ACHN (cell line): ENCODE measurements at regions of chr12 and their contacts with region 1.

Region 1: GRCh38 chr12:99059824-99060511 is 414.9 kb downstream of the APAF1 start:
- DNase-seq: no peak

Region 2: DNA sequence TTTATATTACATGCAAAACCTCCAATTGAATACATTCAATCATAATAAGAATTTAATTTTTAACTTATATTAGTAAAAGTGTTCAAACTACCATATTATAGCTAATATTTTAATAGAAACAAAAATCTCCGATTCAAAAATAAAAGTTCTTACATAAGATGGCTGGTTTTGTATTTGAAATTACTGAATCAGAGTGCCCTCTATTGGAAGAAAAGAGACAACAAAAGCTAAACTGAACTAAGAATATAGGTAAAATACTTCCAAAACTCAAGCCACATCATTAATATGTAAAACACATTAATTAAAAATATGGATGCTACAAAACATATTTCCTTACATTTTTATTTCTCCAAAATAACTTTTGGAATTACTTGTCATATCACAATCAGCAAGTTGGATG is 707.8 kb after region 1 on chr12:
- in situ Hi-C with region 1: loop called (anchors 25 kb)
- DNase-seq: peak; percentile 63